Colonic mucosa (tissue), 4 donors: ENCODE measurements at regions of chr3 and their contacts with region 1.

Region 1: GRCh38 chr3:170037463-170038433 is at the start of gene GPR160:
- DNase-seq: peak; percentile 94
- H3K4me3 ChIP-seq: peak within 1 kb of the TSS; percentile 80
- H3K27ac ChIP-seq: peak within 1 kb of the TSS; percentile 89
- H3K4me1 ChIP-seq: no peaks in the 10 kb centered on the region
- H3K27me3 ChIP-seq: no peaks in the 10 kb centered on the region
- CTCF ChIP-seq: peak; percentile 57
- total RNA-seq, gene GPR160: 56.4 to 78.4 TPM

Region 2: GRCh38 chr3:169764452-169765274 is 273.1 kb before region 1 on chr3 and contains the start of gene TERC:
- intact Hi-C with region 1: loop called (anchors 5 kb)
- DNase-seq: peak; percentile 93
- H3K4me3 ChIP-seq: peak within 1 kb of the TSS; percentile 62
- H3K27ac ChIP-seq: peak within 1 kb of the TSS; percentile 90
- H3K4me1 ChIP-seq: no peaks in the 10 kb centered on the region
- H3K27me3 ChIP-seq: no peaks in the 10 kb centered on the region
- CTCF ChIP-seq: no peak
- total RNA-seq, gene TERC: 5.5 to 9.6 TPM

Region 3: DNA sequence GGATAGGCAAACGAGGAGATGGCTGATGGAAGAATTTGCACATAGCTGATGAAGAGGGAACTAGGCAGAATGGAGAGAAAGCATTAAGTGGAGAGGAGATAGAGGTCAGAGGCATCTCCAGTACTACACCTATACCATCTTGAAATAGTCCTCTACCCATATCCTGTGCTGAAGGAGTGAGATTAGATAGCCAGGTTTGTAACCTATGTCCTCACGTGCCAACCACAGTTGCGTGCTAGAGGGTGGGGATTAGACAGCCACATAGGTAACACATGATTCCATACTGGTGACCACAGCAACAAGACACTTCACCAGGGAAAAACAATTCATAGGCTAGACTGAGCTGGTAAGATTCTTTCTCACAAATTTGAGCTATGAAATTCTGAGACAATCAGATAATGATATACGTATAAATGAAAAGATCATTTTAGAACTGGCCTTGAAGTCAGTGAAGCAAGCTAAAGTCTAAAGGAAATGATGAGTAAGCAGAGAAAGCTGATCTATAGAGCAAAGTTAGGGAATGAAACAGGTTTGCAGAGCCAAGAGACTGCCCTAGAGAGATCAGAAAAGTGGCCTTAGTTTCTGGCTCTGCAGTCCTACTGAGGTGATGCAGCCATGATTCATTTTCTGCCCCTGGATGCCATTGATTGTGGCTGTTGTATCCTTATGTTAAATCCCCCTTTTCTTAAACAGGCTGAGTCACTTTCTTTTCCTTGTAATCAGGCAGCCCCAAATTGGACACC is 246.9 kb before region 1 on chr3:
- intact Hi-C with region 1: no loop called
- DNase-seq: no peak
- H3K4me3 ChIP-seq: no peak overlapping the region
- H3K27ac ChIP-seq: no peak overlapping the region
- H3K4me1 ChIP-seq: no peaks in the 10 kb centered on the region
- H3K27me3 ChIP-seq: no peaks in the 10 kb centered on the region
- CTCF ChIP-seq: no peak

Region 4: DNA sequence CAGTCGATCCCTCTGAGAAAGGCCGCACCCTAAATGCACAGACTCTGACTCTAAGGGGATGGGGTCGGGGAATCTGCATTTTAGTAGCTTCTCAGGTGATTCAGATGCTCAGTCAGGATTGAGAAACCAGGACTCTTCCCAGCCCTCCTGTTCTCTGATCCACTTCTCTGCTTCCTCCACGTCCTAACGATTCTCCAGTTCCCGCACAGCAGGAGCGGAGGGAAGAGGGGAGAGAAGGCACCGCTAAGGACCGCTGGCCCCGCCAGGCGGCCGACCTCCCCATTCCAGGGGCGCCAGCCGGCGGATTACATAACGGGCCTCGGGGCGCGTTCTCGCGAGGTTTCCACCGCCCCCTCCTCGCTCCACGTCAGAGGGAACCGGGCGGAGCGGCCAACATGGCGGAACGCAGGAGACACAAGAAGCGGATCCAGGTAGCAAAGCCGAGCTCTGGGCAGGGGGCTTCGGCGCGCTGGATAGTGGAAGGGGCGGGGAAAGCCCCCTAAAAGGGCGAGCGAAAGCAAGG is 71.3 kb before region 1 on chr3 and contains the start of gene SEC62:
- intact Hi-C with region 1: no loop called
- DNase-seq: peak; percentile 95
- H3K4me3 ChIP-seq: peak within 1 kb of the TSS; percentile 79
- H3K27ac ChIP-seq: peak within 1 kb of the TSS; percentile 91
- H3K4me1 ChIP-seq: peaks cover 4% of the 10 kb centered on the region
- H3K27me3 ChIP-seq: no peaks in the 10 kb centered on the region
- CTCF ChIP-seq: peak; percentile 12
- total RNA-seq, gene SEC62: 70.0 to 98.3 TPM